GM10248 (cell line): ENCODE measurements at regions of chr16 and their contacts with region 1.

Region 1: GRCh38 chr16:10888320-10888937 is 11.4 kb downstream of the CIITA start:
- DNase-seq: no peak
- CTCF ChIP-seq: no peak

Region 2: GRCh38 chr16:10876799-10877341 is 11.6 kb before region 1 on chr16 and contains the start of gene CIITA:
- CTCF ChIA-PET with region 1: interaction called, 31 read pairs
- POLR2A ChIA-PET with region 1: interaction called, 8 read pairs
- DNase-seq: peak; percentile 86
- CTCF ChIP-seq: no peak

Region 3: GRCh38 chr16:10906914-10907756 is 18.7 kb after region 1 on chr16:
- CTCF ChIA-PET with region 1: interaction called, 11 read pairs
- POLR2A ChIA-PET with region 1: interaction called, 3 read pairs
- DNase-seq: no peak
- CTCF ChIP-seq: no peak

Region 4: DNA sequence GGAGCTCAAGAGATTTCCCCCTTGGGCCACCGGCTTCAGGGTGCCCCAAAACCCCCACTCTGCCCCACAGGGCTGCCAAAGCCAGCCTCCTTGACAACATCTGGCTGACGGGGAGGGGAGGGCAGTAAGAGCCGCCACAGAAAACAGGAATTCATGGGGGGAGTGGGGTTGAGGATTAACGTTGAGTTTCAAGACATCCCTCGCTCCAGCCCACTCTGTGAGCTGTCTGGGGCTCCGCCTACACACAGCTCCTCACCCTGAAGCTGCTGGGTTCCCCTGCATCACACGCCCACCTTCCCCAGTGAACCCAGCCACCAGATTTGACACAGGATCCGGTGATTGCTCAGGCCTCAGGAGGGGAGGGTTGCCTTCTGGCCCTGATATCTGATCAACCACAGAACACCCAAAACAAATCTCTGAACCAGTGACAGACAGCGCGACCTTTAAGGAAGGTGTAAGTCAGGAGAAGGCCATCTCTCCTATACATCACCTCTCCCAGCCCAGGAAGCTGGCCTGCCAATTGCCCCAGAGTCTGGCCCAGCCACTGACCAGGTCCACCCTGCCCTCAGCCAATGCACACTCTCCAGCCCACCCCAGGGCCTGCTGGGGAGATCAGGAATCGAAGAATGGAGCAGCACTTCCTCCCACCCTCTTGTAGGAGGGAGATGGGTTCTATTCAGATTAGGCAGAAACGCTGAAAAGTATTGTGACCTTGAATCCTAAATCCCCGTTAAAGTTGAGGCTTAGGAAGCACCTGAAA is 188.0 kb after region 1 on chr16:
- CTCF ChIA-PET with region 1: no interaction called
- POLR2A ChIA-PET with region 1: no interaction called
- DNase-seq: peak; percentile 89
- CTCF ChIP-seq: no peak